Activated CD4-positive, alpha-beta T cell treated with anti-CD3 and anti-CD28 coated beads for 36 hours (primary cell): ENCODE measurements at regions of chr11 and their contacts with region 1.

Region 1: GRCh38 chr11:117026593-117027330 is 71.5 kb downstream of the SIK3 start:
- DNase-seq: no peak
- ATAC-seq: peak; percentile 89
- H3K4me3 Mint-ChIP-seq: no peak overlapping the region
- H3K27ac Mint-ChIP-seq: peak overlapping the region; percentile 83
- H3K4me1 Mint-ChIP-seq: peaks cover 66% of the 10 kb centered on the region
- H3K27me3 Mint-ChIP-seq: no peaks in the 10 kb centered on the region

Region 2: GRCh38 chr11:116927163-116927974 is 99.4 kb before region 1 on chr11:
- CTCF ChIA-PET with region 1: interaction called, 5 read pairs
- POLR2A ChIA-PET with region 1: interaction called, 4 read pairs
- intact Hi-C with region 1: loop called (anchors 1 kb)
- DNase-seq: peak; percentile 72
- ATAC-seq: peak; percentile 33
- H3K4me3 Mint-ChIP-seq: peak overlapping the region; percentile 18
- H3K27ac Mint-ChIP-seq: peak overlapping the region; percentile 49
- H3K4me1 Mint-ChIP-seq: peaks cover 74% of the 10 kb centered on the region
- H3K27me3 Mint-ChIP-seq: no peaks in the 10 kb centered on the region

Region 3: GRCh38 chr11:117010808-117011540 is 15.8 kb before region 1 on chr11:
- CTCF ChIA-PET with region 1: interaction called, 6 read pairs
- POLR2A ChIA-PET with region 1: interaction called, 12 read pairs
- intact Hi-C with region 1: loop called (anchors 1 kb)
- DNase-seq: no peak
- ATAC-seq: peak; percentile 93
- H3K4me3 Mint-ChIP-seq: no peak overlapping the region
- H3K27ac Mint-ChIP-seq: peak overlapping the region; percentile 67
- H3K4me1 Mint-ChIP-seq: peaks cover 44% of the 10 kb centered on the region
- H3K27me3 Mint-ChIP-seq: no peaks in the 10 kb centered on the region

Region 4: DNA sequence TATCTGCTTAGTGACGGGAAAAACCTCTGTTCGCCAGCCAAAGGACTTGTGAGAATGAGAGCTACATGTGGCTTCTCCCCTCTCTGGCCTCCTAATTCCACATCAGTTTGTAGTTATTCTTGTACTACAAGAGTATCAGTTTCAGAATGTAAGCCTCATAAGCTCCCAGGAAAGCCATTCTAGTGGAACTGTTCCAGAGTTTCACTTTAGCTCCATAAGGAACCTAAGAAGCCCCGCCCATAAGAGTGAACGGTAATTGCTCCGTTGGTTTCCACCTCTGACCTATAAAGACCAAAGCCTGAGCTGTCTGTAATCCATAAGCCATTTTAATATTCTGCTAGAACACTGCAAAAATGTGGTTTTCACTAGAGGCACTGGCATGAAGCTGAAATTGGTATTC is 18.4 kb after region 1 on chr11:
- CTCF ChIA-PET with region 1: interaction called, 4 read pairs
- POLR2A ChIA-PET with region 1: interaction called, 5 read pairs
- intact Hi-C with region 1: loop called in 1 of 2 experiments (anchors 2 kb)
- DNase-seq: no peak
- ATAC-seq: no peak
- H3K4me3 Mint-ChIP-seq: no peak overlapping the region
- H3K27ac Mint-ChIP-seq: peak overlapping the region; percentile 47
- H3K4me1 Mint-ChIP-seq: peaks cover 47% of the 10 kb centered on the region
- H3K27me3 Mint-ChIP-seq: no peaks in the 10 kb centered on the region

Region 5: DNA sequence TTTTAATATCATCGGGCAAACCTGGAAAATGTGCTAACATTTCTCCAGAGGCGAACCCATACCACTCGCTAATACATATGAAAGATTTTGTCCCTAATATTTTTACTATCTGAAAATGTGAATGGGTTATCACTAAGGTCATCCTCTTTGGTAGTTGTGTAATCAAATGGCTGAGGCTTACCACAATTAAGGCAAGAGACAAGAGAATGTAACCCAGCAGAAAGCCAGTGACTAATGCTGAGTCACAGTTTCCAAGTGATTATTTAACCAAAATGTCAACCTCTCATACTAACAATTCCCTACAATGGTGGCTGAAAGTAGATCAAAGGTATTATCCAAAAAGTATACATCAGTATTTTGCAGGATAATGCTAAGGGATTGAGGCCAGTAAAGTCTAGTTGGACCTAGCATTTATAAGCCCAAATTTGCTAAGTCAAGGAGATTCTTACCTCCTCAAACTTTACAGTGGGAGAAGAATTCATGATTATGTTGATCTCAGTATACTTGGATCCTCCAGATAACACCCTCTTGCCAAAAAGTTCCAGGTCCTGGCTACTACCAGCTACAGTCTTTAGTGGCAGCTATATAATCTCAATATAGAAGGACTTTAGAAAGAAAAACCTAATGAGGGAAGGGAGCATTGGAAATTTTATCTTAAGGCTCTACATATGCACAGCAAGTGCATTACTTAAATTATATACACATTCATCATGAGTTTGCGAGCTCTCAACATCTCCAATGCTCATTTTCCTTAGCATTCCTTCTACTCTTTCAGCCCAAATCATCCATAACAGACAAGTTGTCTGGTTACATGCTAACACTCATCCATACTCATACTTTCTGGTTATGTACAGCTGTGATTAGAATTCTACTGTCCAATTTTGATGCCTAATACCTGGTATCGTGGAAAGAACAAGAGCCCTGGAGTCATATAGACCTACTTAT is 46.0 kb after region 1 on chr11:
- CTCF ChIA-PET with region 1: interaction called, 4 read pairs
- POLR2A ChIA-PET with region 1: no interaction called
- intact Hi-C with region 1: loop called in 1 of 2 experiments (anchors 2 kb)
- DNase-seq: no peak
- ATAC-seq: peak; percentile 59
- H3K4me3 Mint-ChIP-seq: peak overlapping the region; percentile 15
- H3K27ac Mint-ChIP-seq: peak overlapping the region; percentile 42
- H3K4me1 Mint-ChIP-seq: peaks cover 61% of the 10 kb centered on the region
- H3K27me3 Mint-ChIP-seq: no peaks in the 10 kb centered on the region

Region 6: DNA sequence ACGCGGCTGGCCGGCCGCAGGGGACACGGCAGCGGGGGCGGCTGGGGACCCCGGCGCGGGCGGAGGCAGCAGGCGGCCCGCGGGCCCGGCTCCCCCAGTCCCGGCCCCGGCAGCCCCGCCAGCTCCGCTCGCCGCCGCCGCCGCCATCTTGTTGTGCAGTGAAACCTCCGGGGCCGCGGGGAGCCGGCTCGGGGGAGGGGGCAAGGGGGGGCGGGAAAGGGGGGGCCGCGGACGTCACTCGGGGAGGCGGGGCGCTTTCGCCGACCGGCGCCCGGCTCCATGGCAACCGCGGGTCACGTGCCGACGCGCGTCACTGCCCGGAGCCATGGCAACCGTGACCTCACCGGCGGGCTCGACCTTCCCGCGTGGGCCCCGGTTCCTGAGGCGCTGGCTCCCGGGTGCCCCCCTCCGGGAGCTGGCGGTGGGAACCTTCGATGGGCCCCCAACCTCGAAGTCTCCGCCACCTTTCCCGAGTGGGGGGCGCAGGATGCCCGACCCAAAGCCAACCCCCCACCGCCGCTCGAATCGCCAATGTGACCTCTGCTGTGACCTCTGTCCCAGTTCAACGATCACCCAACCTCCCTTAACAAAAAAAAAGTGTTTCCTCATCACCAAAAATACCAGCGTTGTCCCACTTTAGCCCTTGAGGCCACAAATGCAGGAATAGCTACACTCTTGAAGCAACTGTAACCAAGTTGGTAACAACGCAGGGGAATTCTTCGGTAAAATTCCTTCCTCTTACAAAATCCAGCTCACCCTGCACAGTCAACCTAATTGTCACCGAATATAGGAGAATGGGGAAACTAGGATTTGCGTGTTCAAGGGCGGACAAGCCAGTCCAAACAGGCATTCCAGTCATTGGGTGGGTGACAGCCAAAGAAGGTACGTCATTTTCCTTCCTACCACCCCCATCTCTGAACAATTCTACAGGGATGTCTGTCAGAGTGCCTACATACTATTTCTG is 71.8 kb after region 1 on chr11 and contains the start of gene SIK3:
- CTCF ChIA-PET with region 1: no interaction called
- POLR2A ChIA-PET with region 1: interaction called, 7 read pairs
- intact Hi-C with region 1: loop called (anchors 1 to 2 kb)
- DNase-seq: peak; percentile 96
- ATAC-seq: peak; percentile 71
- H3K4me3 Mint-ChIP-seq: peak within 1 kb of the TSS; percentile 93
- H3K27ac Mint-ChIP-seq: peak within 1 kb of the TSS; percentile 93
- H3K4me1 Mint-ChIP-seq: peaks cover 46% of the 10 kb centered on the region
- H3K27me3 Mint-ChIP-seq: no peaks in the 10 kb centered on the region
- total RNA-seq, gene SIK3: 23.6 to 25.3 TPM